A549 (cell line): ENCODE measurements at regions of chr7 and their contacts with region 1.

Region 1: DNA sequence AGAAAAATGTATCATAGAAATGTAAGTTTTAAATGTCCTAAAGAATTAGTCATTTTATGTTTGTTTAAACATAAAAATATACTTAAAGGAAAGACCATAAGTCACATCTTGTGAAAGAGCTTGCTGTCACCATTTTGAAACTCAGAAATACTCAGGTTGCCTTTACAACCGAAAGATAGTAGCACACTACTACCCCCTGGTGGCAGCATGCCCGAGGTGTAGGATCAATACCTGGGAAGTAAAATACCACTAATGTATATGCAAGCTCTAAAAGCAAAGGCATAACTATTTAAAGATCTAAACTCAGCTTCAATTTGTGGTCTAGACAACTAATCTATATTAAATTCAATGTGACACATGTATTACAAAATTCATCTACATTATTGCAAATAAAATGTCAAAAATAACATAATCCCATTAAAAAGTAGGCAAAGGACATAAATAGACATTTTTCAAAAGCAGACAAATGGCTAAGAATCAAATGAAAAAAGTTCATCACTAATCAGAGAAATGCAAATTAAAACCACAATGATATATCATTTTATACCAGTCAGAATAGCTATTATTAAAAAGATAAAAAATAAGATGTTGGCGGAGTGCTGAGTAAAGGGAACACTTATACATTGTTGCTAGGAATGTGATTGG is 47.7 kb upstream of the FGL2 start:
- DNase-seq: peak; percentile 55 to 82
- ATAC-seq: peak; percentile 80 to 91
- H3K4me3 ChIP-seq: no peak overlapping the region
- H3K27ac ChIP-seq: no peak overlapping the region
- H3K4me1 ChIP-seq: no peaks in the 10 kb centered on the region
- CTCF ChIP-seq: peak; percentile 87
- EP300 ChIP-seq: no peak
- POLR2A ChIP-seq: no peak
- RAD21 ChIP-seq: peak; percentile 79 to 83

Region 2: GRCh38 chr7:77217474-77218185 is 29.7 kb before region 1 on chr7:
- CTCF ChIA-PET with region 1: no interaction called
- POLR2A ChIA-PET with region 1: no interaction called
- DNase-seq: no peak
- ATAC-seq: no peak
- H3K4me3 ChIP-seq: no peak overlapping the region
- H3K27ac ChIP-seq: no peak overlapping the region
- H3K4me1 ChIP-seq: peaks cover 11% of the 10 kb centered on the region; the same call in 2 of the 3 replicates
- CTCF ChIP-seq: no peak
- EP300 ChIP-seq: no peak
- POLR2A ChIP-seq: no peak
- RAD21 ChIP-seq: no peak

Region 3: DNA sequence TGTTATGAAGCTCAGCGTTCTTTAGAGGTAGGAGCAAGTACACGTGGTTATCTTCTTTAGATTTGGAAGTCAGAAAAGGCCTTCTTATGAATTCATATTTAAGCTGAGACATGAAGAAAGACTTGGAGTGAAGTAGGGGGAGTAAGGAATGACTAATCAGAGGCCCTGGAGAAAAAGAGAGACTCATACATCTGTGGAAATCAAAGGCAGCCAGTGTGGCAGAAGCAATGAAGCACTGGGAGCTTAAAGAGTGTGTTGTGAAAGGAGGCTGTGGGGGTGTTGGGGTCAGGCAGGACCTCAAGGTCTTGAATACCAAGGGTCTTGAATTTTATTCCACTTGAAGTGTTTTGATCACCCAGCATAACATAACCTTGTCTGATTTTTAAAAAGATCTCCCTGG is 12.1 kb before region 1 on chr7:
- CTCF ChIA-PET with region 1: interaction called, 11 read pairs
- POLR2A ChIA-PET with region 1: no interaction called
- DNase-seq: no peak
- ATAC-seq: no peak
- H3K4me3 ChIP-seq: no peak overlapping the region
- H3K27ac ChIP-seq: no peak overlapping the region
- H3K4me1 ChIP-seq: no peaks in the 10 kb centered on the region
- CTCF ChIP-seq: no peak
- EP300 ChIP-seq: no peak
- POLR2A ChIP-seq: no peak
- RAD21 ChIP-seq: no peak

Region 4: GRCh38 chr7:77258014-77258413 is 10.7 kb after region 1 on chr7:
- CTCF ChIA-PET with region 1: interaction called, 14 read pairs
- POLR2A ChIA-PET with region 1: no interaction called
- DNase-seq: no peak
- ATAC-seq: peak in 1 of 2 experiments; percentile 47; a peak in 1 of 6 replicates
- H3K4me3 ChIP-seq: no peak overlapping the region
- H3K27ac ChIP-seq: no peak overlapping the region
- H3K4me1 ChIP-seq: no peaks in the 10 kb centered on the region
- CTCF ChIP-seq: no peak
- EP300 ChIP-seq: no peak
- POLR2A ChIP-seq: no peak
- RAD21 ChIP-seq: no peak